Right ventricle myocardium inferior (tissue), 1 donor: ENCODE measurements at regions of chr10 and their contacts with region 1.

Region 1: GRCh38 chr10:75651417-75651816 is 220.0 kb downstream of the LRMDA start:
- DNase-seq: no peak
- ATAC-seq: no peak

Region 2: GRCh38 chr10:75772153-75772887 is 120.9 kb after region 1 on chr10:
- intact Hi-C with region 1: loop called (anchors 10 kb)
- DNase-seq: no peak
- ATAC-seq: no peak